ENCODE measurements at regions of chr5 and their contacts with region 1.

Region 1: DNA sequence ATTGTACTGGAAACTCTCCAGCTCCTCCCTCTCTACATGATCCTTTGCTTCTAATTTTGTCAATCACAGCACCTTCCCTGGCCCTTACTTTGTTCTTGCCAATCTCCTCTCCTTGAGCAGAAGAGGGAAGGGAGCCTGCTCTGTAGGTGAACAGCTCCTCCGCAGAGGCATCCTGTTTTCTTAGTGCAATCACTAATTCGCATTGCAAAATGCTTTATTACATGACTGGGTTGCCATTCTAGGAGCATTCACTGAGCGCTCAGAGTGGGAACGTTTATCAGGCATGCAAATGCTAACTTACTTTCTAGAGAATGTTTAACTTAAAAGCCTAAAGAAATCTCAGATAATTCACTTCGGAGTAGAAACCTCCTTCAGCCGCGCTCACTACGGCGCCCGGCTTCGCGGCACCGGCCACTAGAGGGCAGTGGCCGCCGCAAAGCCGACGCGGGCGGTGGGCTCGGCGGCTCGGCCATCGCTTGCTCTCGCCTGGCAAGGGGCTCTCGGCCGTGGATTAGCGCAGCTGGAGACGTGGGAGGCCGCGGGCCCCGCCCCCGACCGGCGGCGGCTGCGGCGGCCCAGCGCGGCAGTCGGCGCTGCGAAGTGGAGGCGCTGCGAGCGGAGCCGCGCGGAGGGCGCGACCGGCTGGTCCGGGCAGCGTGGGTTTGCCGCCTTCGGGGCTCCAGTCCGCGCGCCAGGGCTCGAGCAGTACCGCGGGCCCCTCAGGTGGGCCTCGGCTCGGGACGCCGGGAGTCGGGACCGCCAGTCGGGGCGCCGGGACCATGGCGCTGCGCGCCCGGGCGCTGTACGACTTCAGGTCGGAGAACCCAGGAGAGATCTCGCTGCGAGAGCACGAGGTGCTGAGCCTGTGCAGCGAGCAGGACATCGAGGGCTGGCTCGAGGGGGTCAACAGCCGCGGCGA is at the start of gene SNX18:
- DNase-seq: peak; percentile 83
- H3K4me3 ChIP-seq: peak within 1 kb of the TSS; percentile 76 to 84 (median 81)
- H3K27ac ChIP-seq: peak within 1 kb of the TSS; percentile 54
- H3K4me1 ChIP-seq: peaks cover 37% of the 10 kb centered on the region
- H3K27me3 ChIP-seq: no peaks in the 10 kb centered on the region
- CTCF ChIP-seq: peak; percentile 70 to 96
- total RNA-seq, gene SNX18: 22.6 to 84.0 TPM

Region 2: GRCh38 chr5:54624805-54625561 is 107.5 kb after region 1 on chr5:
- CTCF ChIA-PET with region 1: no interaction called
- dilution Hi-C with region 1: no loop called
- in situ Hi-C with region 1: no loop called
- intact Hi-C with region 1: no loop called
- DNase-seq: no peak
- H3K4me3 ChIP-seq: no peak overlapping the region
- H3K27ac ChIP-seq: no peak overlapping the region
- H3K4me1 ChIP-seq: peaks cover 4% of the 10 kb centered on the region
- H3K27me3 ChIP-seq: no peaks in the 10 kb centered on the region
- CTCF ChIP-seq: no peak

Region 3: GRCh38 chr5:54646356-54647101 is 129.1 kb after region 1 on chr5:
- CTCF ChIA-PET with region 1: no interaction called
- dilution Hi-C with region 1: no loop called
- in situ Hi-C with region 1: no loop called
- intact Hi-C with region 1: loop called (anchors 2 kb)
- DNase-seq: peak; percentile 59
- H3K4me3 ChIP-seq: no peak overlapping the region
- H3K27ac ChIP-seq: no peak overlapping the region
- H3K4me1 ChIP-seq: peaks cover 46% of the 10 kb centered on the region
- H3K27me3 ChIP-seq: no peaks in the 10 kb centered on the region
- CTCF ChIP-seq: no peak

Region 4: GRCh38 chr5:54743997-54744788 is 226.8 kb after region 1 on chr5:
- CTCF ChIA-PET with region 1: interaction called, 3 read pairs
- dilution Hi-C with region 1: no loop called
- in situ Hi-C with region 1: no loop called
- intact Hi-C with region 1: loop called (anchors 1 kb)
- DNase-seq: peak; percentile 95
- H3K4me3 ChIP-seq: no peak overlapping the region
- H3K27ac ChIP-seq: peak overlapping the region; percentile 64
- H3K4me1 ChIP-seq: peaks cover 31% of the 10 kb centered on the region
- H3K27me3 ChIP-seq: no peaks in the 10 kb centered on the region
- CTCF ChIP-seq: no peak

Region 5: DNA sequence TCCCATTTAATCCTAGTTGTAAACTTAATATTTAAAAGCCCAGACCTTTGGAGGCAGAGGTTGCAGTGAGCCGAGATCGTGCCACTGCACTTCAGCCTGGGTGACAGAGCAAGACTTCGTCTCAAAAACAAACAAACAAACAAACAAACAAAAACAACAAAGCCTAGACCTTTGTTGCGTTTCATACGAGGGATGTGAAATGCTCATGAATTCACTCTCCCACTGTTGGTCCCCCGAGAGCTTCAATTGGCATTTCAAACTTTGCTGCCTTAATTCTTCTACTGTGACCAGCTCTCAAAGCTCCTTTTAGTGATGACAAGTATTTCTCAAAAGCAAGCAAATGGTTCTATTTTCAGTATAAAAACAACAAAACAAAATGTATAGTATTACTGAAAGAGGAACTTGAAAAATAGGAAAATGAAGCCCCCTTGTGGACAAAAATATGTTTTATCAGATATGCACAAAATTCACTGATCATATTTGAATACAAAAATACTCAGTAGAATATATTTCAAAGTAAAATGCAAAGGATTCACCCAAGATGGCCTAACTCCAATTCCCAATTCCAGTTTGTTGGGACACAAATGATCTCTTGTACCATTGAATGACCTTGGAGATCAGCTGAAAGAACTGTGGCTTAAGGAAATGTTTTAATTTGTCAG is 327.6 kb after region 1 on chr5:
- CTCF ChIA-PET with region 1: interaction called, 15 read pairs
- dilution Hi-C with region 1: no loop called
- in situ Hi-C with region 1: loop called (anchors 5 to 10 kb)
- intact Hi-C with region 1: loop called (anchors 1 kb)
- DNase-seq: peak; percentile 8
- H3K4me3 ChIP-seq: no peak overlapping the region
- H3K27ac ChIP-seq: no peak overlapping the region
- H3K4me1 ChIP-seq: peaks cover 6% of the 10 kb centered on the region
- H3K27me3 ChIP-seq: no peaks in the 10 kb centered on the region
- CTCF ChIP-seq: peak; percentile 24 to 43

Region 6: GRCh38 chr5:54895816-54896341 is 378.4 kb after region 1 on chr5:
- CTCF ChIA-PET with region 1: no interaction called
- dilution Hi-C with region 1: no loop called
- in situ Hi-C with region 1: no loop called
- intact Hi-C with region 1: loop called (anchors 1 kb)
- DNase-seq: peak; percentile 42
- H3K4me3 ChIP-seq: no peak overlapping the region
- H3K27ac ChIP-seq: no peak overlapping the region
- H3K4me1 ChIP-seq: no peaks in the 10 kb centered on the region
- H3K27me3 ChIP-seq: peaks cover 4% of the 10 kb centered on the region
- CTCF ChIP-seq: peak; percentile 48 to 71